ENCODE measurements at regions of chr13 and their contacts with region 1.

Region 1: DNA sequence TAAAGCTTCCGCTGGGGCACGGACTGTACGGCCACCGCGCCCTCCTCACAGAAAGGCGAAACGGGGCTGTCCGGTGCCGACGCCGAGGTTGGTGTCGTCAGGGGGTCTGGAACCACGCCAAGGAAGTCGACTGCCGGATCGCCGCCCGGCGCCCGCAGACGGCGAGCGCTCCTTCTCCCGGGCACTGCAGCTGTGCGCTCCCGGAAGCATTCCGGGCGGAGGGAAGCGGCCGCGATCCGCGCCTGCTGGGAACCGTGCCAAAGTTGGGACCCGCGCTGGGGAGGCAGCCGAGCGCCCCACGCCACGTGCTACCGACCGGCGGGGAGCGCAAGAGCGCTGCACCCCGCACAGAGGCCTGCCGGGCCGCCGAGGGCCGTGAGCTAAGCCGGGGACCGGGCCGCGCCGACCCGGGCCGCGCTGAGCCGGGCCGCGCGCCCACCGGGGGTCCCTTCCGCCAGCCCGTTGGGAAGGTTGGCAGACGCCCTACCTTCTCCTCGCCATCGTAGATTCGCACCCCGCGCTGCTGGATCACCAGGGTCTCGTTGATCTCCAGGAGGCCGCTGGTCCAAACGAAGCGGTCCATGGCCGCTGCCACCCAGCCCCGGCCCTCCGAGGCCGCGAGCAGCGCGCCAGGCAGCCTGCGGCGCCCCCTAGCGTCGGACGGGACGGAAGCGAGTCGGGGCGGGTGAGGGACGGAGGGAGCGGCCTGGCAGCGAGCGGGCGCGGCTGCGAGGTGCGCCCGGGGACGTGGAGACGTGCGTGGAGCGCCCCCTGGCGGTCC is at the start of gene VPS36:
- DNase-seq: peak; percentile 72
- ATAC-seq: peak; percentile 81
- H3K4me3 ChIP-seq: peak within 1 kb of the TSS; percentile 69
- H3K27ac ChIP-seq: peak within 1 kb of the TSS; percentile 90
- H3K4me1 ChIP-seq: peaks cover 14% of the 10 kb centered on the region
- H3K27me3 ChIP-seq: no peaks in the 10 kb centered on the region
- CTCF ChIP-seq: peak; percentile 92 to 100 (median 99)
- EP300 ChIP-seq: no peak
- POLR2A ChIP-seq: peak; percentile 94
- RAD21 ChIP-seq: peak; percentile 70
- polyA plus RNA-seq, gene VPS36: 10.3 to 12.3 TPM

Region 2: DNA sequence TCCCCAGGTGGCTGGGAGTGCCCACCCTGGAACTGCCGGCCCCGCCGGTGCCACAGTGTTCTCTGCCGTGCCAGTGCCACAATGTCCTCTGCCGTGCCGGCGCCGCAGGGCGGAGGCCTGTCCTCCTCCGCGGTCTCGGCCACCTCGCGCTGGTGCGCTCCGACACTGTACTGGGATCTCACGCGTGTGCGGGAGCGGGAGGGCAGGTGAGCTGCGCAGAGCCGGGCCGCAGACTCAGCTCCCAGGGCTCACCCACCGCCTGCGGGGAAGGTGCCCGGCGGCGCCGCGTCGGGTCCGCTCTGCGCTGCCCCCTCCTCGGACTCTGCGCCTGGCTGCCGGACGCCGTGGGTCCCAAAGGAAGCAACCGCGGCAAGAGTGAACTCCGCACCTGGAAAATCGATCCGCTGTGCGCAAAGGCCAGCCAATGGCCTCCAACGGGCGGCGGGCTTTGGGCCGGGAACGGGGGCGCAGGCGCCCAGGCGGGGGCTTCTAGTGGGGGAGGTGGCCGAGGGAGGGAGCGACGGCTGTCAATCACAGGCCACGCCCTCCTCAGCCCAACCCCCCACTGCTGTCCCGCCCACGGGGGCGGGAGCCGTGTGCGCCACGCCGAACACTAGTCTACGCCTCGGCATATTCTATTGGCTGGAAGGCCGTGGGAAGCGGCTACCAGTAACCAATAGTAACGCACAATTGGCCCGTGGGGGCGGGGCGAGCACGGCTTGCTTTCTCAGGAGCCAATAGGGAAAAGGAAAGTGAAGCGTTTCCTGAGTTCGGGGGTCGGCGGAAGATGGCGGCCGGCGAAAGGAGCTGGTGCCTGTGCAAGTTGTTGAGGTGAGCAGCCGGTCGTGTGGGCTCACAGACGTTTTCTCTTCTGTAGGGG is 438.3 kb before region 1 on chr13 and contains the start of gene ALG11:
- CTCF ChIA-PET with region 1: interaction called, 6 read pairs
- POLR2A ChIA-PET with region 1: no interaction called
- RAD21 ChIA-PET with region 1: interaction called, 4 read pairs
- SMC1A ChIA-PET with region 1: no interaction called
- in situ Hi-C with region 1: loop called (anchors 10 kb)
- intact Hi-C with region 1: loop called (anchors 5 kb)
- DNase-seq: peak; percentile 94
- ATAC-seq: peak; percentile 100
- H3K4me3 ChIP-seq: peak within 1 kb of the TSS; percentile 95
- H3K27ac ChIP-seq: peak within 1 kb of the TSS; percentile 49
- H3K4me1 ChIP-seq: no peaks in the 10 kb centered on the region; the same call in 1 of the 2 replicates
- H3K27me3 ChIP-seq: peaks cover 2 to 13% of the 10 kb centered on the region in 2 experiments; a peak in 2 of 4 replicates
- CTCF ChIP-seq: no peak
- EP300 ChIP-seq: no peak
- POLR2A ChIP-seq: peak; percentile 92
- RAD21 ChIP-seq: no peak
- polyA plus RNA-seq, gene ALG11: 10.4 to 16.0 TPM

Region 3: DNA sequence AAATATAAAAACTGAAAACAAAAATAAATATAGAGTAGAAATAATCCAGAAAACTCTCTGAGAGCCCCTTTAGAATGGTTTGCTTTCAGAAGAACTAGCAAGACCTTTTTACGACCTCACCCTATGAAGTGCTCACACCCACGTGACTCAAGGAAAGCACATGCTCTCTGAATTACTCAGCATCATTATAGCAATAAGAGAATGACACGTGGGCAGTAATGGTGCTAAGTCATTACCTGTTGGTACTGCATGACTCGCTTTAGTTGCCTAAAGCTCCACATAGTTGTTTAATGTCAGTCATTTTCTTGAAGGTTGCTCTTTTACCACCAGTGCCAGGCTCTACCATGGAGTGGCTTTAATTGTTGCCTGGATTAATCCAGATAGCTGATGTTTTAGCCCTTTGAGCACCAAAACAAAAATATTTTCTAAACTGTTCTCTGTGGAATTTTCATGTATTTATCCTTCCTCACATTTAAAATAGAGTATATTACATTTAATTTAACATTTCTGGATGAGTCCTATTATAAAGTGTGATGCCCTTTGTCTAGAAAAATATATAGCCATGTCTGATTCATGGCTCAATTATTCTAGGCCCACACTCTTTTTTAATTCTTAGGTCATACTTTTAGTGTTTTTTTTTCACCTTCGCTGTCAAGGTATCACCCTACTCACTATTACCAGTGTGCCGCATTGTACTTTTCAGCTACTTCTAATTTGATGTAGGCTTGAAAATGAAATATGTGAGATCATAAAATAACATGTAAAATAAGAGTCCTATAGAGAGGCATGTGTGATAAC is 101.0 kb before region 1 on chr13:
- CTCF ChIA-PET with region 1: interaction called, 82 read pairs
- POLR2A ChIA-PET with region 1: interaction called, 3 read pairs
- RAD21 ChIA-PET with region 1: interaction called, 34 read pairs
- SMC1A ChIA-PET with region 1: interaction called, 46 read pairs
- in situ Hi-C with region 1: loop called (anchors 5 kb)
- intact Hi-C with region 1: no loop called
- DNase-seq: no peak
- ATAC-seq: peak; percentile 65
- H3K4me3 ChIP-seq: no peak overlapping the region
- H3K27ac ChIP-seq: no peak overlapping the region
- H3K4me1 ChIP-seq: no peaks in the 10 kb centered on the region
- H3K27me3 ChIP-seq: no peaks in the 10 kb centered on the region
- CTCF ChIP-seq: no peak
- EP300 ChIP-seq: no peak
- POLR2A ChIP-seq: no peak
- RAD21 ChIP-seq: no peak

Region 4: GRCh38 chr13:52652196-52652979 is 202.2 kb after region 1 on chr13 and contains the start of gene SUGT1:
- CTCF ChIA-PET with region 1: interaction called, 9 read pairs
- POLR2A ChIA-PET with region 1: no interaction called
- RAD21 ChIA-PET with region 1: no interaction called
- SMC1A ChIA-PET with region 1: no interaction called
- in situ Hi-C with region 1: loop called (anchors 10 kb)
- intact Hi-C with region 1: loop called (anchors 5 kb)
- DNase-seq: peak; percentile 92
- ATAC-seq: peak; percentile 96
- H3K4me3 ChIP-seq: peak within 1 kb of the TSS; percentile 79
- H3K27ac ChIP-seq: peak within 1 kb of the TSS; percentile 94
- H3K4me1 ChIP-seq: no peaks in the 10 kb centered on the region; the same call in 1 of the 2 replicates
- H3K27me3 ChIP-seq: no peaks in the 10 kb centered on the region
- CTCF ChIP-seq: peak; percentile 55 to 81 (median 73)
- EP300 ChIP-seq: no peak
- POLR2A ChIP-seq: peak; percentile 79
- RAD21 ChIP-seq: no peak
- polyA plus RNA-seq, gene SUGT1: 82.5 to 85.6 TPM